ENCODE measurements at regions of chr22 and their contacts with region 1.

Region 1: GRCh38 chr22:30754971-30755756 is 60.5 kb downstream of the OSBP2 start:
- DNase-seq: no peak
- ATAC-seq: peak; percentile 98
- H3K4me3 ChIP-seq: no peak overlapping the region
- H3K27ac ChIP-seq: no peak overlapping the region
- H3K4me1 ChIP-seq: no peaks in the 10 kb centered on the region
- H3K27me3 ChIP-seq: no peaks in the 10 kb centered on the region
- CTCF ChIP-seq: peak; percentile 76 to 88 (median 81)
- EP300 ChIP-seq: no peak
- POLR2A ChIP-seq: no peak
- RAD21 ChIP-seq: peak; percentile 98

Region 2: GRCh38 chr22:29766632-29767170 is 988.5 kb before region 1 on chr22 and contains the start of gene ZMAT5:
- CTCF ChIA-PET with region 1: no interaction called
- POLR2A ChIA-PET with region 1: no interaction called
- RAD21 ChIA-PET with region 1: no interaction called
- SMC1A ChIA-PET with region 1: no interaction called
- in situ Hi-C with region 1: no loop called
- intact Hi-C with region 1: no loop called
- DNase-seq: peak; percentile 94
- ATAC-seq: peak; percentile 97
- H3K4me3 ChIP-seq: peak within 1 kb of the TSS; percentile 98
- H3K27ac ChIP-seq: peak within 1 kb of the TSS; percentile 84
- H3K4me1 ChIP-seq: peaks cover 4% of the 10 kb centered on the region
- H3K27me3 ChIP-seq: no peaks in the 10 kb centered on the region
- CTCF ChIP-seq: no peak
- EP300 ChIP-seq: no peak
- POLR2A ChIP-seq: peak; percentile 75
- RAD21 ChIP-seq: no peak
- polyA plus RNA-seq, gene ZMAT5: 2.3 to 10.4 TPM

Region 3: GRCh38 chr22:30444632-30445437 is 310.3 kb before region 1 on chr22:
- CTCF ChIA-PET with region 1: interaction called, 15 read pairs
- POLR2A ChIA-PET with region 1: no interaction called
- RAD21 ChIA-PET with region 1: interaction called, 15 read pairs
- SMC1A ChIA-PET with region 1: no interaction called
- in situ Hi-C with region 1: loop called (anchors 10 kb)
- intact Hi-C with region 1: no loop called
- DNase-seq: no peak
- ATAC-seq: peak; percentile 78
- H3K4me3 ChIP-seq: no peak overlapping the region
- H3K27ac ChIP-seq: no peak overlapping the region
- H3K4me1 ChIP-seq: peaks cover 11% of the 10 kb centered on the region
- H3K27me3 ChIP-seq: no peaks in the 10 kb centered on the region
- CTCF ChIP-seq: peak; percentile 74 to 81 (median 78)
- EP300 ChIP-seq: no peak
- POLR2A ChIP-seq: peak; percentile 60
- RAD21 ChIP-seq: peak; percentile 80

Region 4: DNA sequence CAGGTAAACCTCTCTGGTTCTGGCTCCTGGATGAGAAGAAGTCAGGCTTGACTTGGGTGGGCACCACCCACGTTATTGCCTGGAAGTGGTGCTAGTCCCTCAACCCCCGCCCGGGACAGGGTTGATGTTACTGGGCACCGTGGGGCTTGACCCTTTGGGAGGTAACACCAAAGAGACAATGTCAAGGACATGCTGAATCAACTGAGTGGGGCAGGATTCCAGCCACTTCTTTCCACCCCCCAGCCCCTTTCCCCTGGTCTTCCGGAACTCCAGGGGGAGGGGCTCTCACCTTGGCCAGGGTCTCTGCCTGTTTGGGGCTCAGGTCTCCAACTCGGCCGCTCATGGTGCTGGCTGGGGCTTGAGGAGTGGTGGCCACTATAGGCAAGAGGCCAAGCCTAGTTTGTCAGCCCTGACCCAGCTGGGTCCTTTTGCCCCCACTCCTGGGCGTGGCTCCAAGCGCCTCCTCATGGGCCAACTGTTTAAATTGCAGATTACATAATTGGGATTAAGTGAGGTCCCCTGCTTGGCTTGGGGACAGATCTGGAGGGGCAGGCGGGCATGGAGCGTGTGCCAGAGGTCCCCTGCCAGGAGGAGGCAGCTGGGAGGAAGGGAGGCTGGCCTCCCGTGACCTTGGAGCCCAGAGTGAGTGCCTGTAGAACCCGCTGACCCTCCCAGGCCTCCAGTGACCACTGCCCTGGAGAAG is 283.4 kb before region 1 on chr22 and contains the start of gene SEC14L3:
- CTCF ChIA-PET with region 1: no interaction called
- POLR2A ChIA-PET with region 1: no interaction called
- RAD21 ChIA-PET with region 1: no interaction called
- SMC1A ChIA-PET with region 1: no interaction called
- in situ Hi-C with region 1: no loop called
- intact Hi-C with region 1: no loop called
- DNase-seq: no peak
- ATAC-seq: no peak
- H3K4me3 ChIP-seq: no peak within 1 kb of the TSS
- H3K27ac ChIP-seq: no peak within 1 kb of the TSS
- H3K4me1 ChIP-seq: no peaks in the 10 kb centered on the region
- H3K27me3 ChIP-seq: peaks cover 0 to 2% of the 10 kb centered on the region in 2 experiments; a peak in 3 of 4 replicates
- CTCF ChIP-seq: no peak
- EP300 ChIP-seq: no peak
- POLR2A ChIP-seq: no peak
- RAD21 ChIP-seq: no peak
- polyA plus RNA-seq, gene SEC14L3: 0.03 TPM in 1 of 2 experiments, not detected in the other

Region 5: DNA sequence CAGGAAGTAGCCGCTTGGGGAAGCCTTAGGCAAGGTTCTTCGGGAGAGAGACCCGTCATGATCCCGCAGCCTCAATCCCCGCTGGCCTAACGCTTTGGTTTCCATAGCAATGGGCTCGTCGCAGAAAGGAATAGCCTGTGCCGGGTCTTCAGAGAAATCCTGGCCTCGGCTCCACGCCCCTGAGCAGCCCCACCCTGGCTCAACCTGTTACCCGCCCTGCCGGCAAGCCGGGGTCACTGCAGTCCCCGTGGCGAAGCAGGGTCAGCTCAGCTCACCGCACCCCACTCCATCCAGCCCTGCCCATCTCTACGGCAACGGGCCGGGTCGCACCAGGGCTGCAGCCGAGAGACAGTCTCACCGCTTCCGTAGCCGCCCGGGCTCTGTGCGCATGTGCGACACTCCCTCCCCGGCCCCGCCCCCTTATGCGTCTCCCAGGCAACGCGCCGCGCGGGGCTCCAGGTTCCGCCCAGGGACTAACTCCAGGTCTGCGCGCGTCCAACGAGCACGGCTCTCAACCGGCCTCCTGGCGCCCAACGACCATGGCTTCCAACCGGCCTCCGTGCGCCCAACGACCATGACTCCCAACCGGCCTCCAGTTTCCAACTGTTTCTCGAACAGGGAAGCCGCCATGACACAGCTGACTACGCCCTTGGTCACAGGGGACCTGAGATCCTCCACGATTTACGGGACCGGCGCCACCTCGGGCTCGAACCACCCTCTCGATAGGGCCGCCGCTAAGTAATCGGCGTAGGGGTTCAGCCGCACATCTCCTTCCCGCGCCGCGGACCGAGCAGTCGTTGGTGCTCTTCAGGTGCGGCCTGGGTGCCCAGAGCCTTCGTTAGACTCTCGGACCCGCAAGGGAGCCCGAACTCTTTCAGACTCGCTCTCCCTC is 87.4 kb before region 1 on chr22 and contains the start of gene DUSP18:
- CTCF ChIA-PET with region 1: interaction called, 12 read pairs
- POLR2A ChIA-PET with region 1: no interaction called
- RAD21 ChIA-PET with region 1: interaction called, 3 read pairs
- SMC1A ChIA-PET with region 1: interaction called, 10 read pairs
- in situ Hi-C with region 1: no loop called
- intact Hi-C with region 1: no loop called
- DNase-seq: peak; percentile 64
- ATAC-seq: peak; percentile 98
- H3K4me3 ChIP-seq: peak within 1 kb of the TSS; percentile 77
- H3K27ac ChIP-seq: no peak within 1 kb of the TSS; the same call in 1 of the 2 replicates
- H3K4me1 ChIP-seq: no peaks in the 10 kb centered on the region
- H3K27me3 ChIP-seq: no peaks in the 10 kb centered on the region
- CTCF ChIP-seq: peak in 2 of 3 experiments; percentile 21 to 25; a peak in 1 of 6 replicates
- EP300 ChIP-seq: no peak
- POLR2A ChIP-seq: peak; percentile 82
- RAD21 ChIP-seq: no peak
- polyA plus RNA-seq, gene DUSP18: 1.9 to 2.5 TPM

Region 6: DNA sequence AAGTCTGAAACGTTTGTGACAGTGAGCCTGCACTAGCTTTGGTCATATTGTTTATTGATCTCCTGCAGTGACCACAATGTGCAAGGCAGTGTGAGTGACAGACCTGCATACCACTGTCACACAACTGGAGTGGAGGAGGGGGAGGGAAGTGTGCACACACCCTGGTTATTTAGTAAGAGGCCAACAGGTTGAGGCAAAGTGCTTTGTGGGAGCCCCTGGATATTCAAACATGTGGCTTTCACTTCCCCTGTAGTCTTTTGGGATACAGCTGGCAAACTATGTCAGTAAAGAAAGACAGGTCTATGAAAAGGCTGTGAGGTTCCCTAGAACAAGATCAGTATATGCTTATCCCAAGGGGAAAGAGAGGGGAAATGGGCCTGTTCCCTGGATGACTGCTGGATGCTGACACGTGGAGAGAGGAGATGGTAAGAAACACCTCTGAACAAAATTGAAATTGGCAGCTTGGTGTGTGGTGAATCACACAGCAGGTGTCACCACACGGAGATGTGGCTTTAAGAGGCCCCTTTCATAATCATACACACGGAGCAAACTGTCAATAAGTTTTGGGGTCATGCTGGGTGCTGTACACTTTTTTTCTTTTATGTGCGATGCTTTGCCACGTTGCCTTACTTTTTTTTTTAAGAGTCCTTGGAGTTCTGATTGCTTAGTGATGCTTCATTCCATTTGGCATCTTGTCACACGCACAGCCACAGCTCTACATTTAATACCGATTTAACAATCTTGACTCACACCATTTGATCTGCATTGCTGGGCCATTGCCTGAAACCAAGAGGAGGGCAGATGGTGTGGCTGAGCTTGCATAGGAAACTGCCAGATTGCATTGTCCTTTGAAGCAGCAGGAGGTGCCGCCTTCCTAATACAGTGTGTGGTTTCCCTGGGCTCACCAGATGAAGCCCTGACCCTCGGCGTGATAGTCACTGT is 49.2 kb before region 1 on chr22:
- CTCF ChIA-PET with region 1: interaction called, 12 read pairs
- POLR2A ChIA-PET with region 1: interaction called, 3 read pairs
- RAD21 ChIA-PET with region 1: interaction called, 14 read pairs
- SMC1A ChIA-PET with region 1: interaction called, 11 read pairs
- in situ Hi-C with region 1: no loop called
- intact Hi-C with region 1: loop called (anchors 2 kb)
- DNase-seq: peak; percentile 72
- ATAC-seq: peak; percentile 85
- H3K4me3 ChIP-seq: peak overlapping the region; percentile 19; the same call in 1 of the 2 replicates
- H3K27ac ChIP-seq: peak overlapping the region; percentile 70
- H3K4me1 ChIP-seq: peaks cover 35% of the 10 kb centered on the region
- H3K27me3 ChIP-seq: no peaks in the 10 kb centered on the region
- CTCF ChIP-seq: peak in 1 of 3 experiments; percentile 6; a peak in 1 of 6 replicates
- EP300 ChIP-seq: no peak; a peak in 2 of 4 replicates
- POLR2A ChIP-seq: peak; percentile 51; the same call in 1 of the 2 replicates
- RAD21 ChIP-seq: no peak

Region 7: GRCh38 chr22:30920407-30920806 is 165.2 kb after region 1 on chr22:
- CTCF ChIA-PET with region 1: interaction called, 19 read pairs
- POLR2A ChIA-PET with region 1: no interaction called
- RAD21 ChIA-PET with region 1: interaction called, 8 read pairs
- SMC1A ChIA-PET with region 1: interaction called, 3 read pairs
- in situ Hi-C with region 1: loop called (anchors 25 kb)
- intact Hi-C with region 1: no loop called
- DNase-seq: peak; percentile 27
- ATAC-seq: peak; percentile 85
- H3K4me3 ChIP-seq: peak overlapping the region; percentile 50; the same call in 1 of the 2 replicates
- H3K27ac ChIP-seq: no peak overlapping the region
- H3K4me1 ChIP-seq: peaks cover 3% of the 10 kb centered on the region; the same call in 1 of the 2 replicates
- H3K27me3 ChIP-seq: no peaks in the 10 kb centered on the region
- CTCF ChIP-seq: peak; percentile 85 to 87 (median 86)
- EP300 ChIP-seq: no peak
- POLR2A ChIP-seq: no peak
- RAD21 ChIP-seq: peak; percentile 64